HepG2 (cell line): ENCODE measurements at regions of chr15 and their contacts with region 1.

Region 1: DNA sequence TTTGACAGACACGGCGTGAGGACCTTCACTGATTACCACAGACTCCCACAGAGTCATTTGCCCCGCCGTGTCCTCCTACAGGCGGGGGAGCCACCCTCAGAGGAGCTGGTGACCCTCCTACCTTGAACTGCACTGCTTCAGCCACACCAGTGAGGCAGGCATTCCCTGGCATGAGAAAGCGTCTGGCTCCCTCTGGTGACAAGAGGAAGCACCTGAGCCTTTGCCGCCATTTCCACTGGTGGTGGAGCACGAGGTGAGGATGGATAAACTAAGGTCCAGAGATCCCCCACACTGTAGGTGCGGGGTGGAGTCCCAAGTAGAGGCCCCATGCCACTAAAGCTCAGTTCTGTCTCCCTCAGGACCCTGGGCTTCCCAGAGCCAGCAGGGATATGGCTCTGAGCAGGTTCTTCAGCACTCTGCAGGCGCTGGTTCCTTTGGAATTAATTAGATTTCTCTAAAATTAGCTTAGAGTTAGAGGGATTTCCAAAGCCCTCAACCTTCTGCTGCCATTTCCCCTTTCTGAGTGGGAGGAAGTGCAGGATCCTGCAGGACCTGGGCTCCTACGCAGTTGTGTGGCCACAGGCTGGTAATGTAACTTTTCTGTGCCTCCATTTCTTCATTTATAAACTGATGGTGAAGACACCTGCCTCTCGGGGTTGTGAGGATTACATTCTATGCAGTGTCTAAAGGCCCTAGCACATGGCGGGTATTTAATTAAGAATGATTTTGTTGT is 224.0 kb downstream of the SLCO3A1 start:
- DNase-seq: peak; percentile 44
- ATAC-seq: peak; percentile 88
- H3K4me3 ChIP-seq: no peak overlapping the region
- H3K27ac ChIP-seq: no peak overlapping the region
- H3K4me1 ChIP-seq: no peaks in the 10 kb centered on the region
- H3K27me3 ChIP-seq: peaks cover 0 to 12% of the 10 kb centered on the region in 2 experiments; a peak in 3 of 5 replicates
- CTCF ChIP-seq: peak; percentile 90
- EP300 ChIP-seq: no peak
- POLR2A ChIP-seq: no peak
- RAD21 ChIP-seq: peak; percentile 64

Region 2: DNA sequence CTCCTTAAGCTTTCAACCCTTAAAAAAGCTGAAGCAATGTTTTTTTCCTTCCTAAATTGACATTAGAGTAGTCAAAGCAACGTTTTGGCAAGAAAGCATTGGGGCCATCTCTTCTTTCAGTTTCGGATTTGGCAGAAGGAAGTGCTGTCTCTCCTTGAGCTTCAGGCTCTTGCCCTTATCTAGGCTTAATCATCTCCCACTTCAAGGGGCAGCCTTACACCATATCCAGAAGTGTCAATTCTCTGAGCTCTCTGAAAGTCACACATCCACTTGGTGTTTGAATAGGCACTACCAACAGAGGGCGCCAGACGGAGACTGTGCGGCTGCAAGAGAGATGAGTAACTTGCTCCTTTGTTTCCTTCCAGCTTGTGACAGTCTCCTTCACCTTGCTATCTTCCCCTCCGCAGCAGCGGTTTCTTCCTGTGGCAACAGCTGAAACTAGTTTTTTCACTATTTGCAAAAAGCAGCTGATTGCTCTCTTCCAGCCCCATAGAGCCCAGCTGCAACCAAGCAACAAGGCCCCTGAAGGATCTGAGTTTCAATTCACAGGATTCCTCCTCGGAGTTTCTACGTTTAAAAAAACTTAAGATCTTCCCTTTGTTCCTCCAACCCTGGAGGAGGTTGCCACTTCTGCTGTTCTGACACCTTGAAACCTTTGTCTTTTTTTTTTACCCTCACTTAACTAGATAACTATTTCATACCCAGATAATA is 371.0 kb before region 1 on chr15:
- CTCF ChIA-PET with region 1: no interaction called
- POLR2A ChIA-PET with region 1: no interaction called
- in situ Hi-C with region 1: no loop called
- intact Hi-C with region 1: loop called (anchors 2 kb)
- DNase-seq: peak; percentile 38
- ATAC-seq: peak; percentile 80
- H3K4me3 ChIP-seq: no peak overlapping the region
- H3K27ac ChIP-seq: no peak overlapping the region
- H3K4me1 ChIP-seq: no peaks in the 10 kb centered on the region
- H3K27me3 ChIP-seq: no peaks in the 10 kb centered on the region; a peak in 1 of 5 replicates
- CTCF ChIP-seq: peak; percentile 73
- EP300 ChIP-seq: no peak
- POLR2A ChIP-seq: no peak
- RAD21 ChIP-seq: no peak

Region 3: GRCh38 chr15:91852741-91853510 is 224.6 kb before region 1 on chr15:
- CTCF ChIA-PET with region 1: no interaction called
- POLR2A ChIA-PET with region 1: no interaction called
- in situ Hi-C with region 1: no loop called
- intact Hi-C with region 1: loop called (anchors 10 kb)
- DNase-seq: peak; percentile 13
- ATAC-seq: peak; percentile 97
- H3K4me3 ChIP-seq: peak overlapping the region; percentile 40 to 60 (median 46); a peak in 5 of 6 replicates
- H3K27ac ChIP-seq: no peak overlapping the region
- H3K4me1 ChIP-seq: no peaks in the 10 kb centered on the region
- H3K27me3 ChIP-seq: peaks cover 4 to 45% of the 10 kb centered on the region in 2 experiments; a peak in 4 of 5 replicates
- CTCF ChIP-seq: peak; percentile 71
- EP300 ChIP-seq: no peak
- POLR2A ChIP-seq: no peak
- RAD21 ChIP-seq: peak; percentile 42

Region 4: GRCh38 chr15:92693691-92694331 is 616.3 kb after region 1 on chr15:
- CTCF ChIA-PET with region 1: no interaction called
- POLR2A ChIA-PET with region 1: no interaction called
- in situ Hi-C with region 1: loop called (anchors 25 kb)
- intact Hi-C with region 1: no loop called
- DNase-seq: peak; percentile 50
- ATAC-seq: peak; percentile 100
- H3K4me3 ChIP-seq: no peak overlapping the region
- H3K27ac ChIP-seq: no peak overlapping the region
- H3K4me1 ChIP-seq: no peaks in the 10 kb centered on the region
- H3K27me3 ChIP-seq: peaks cover 0 to 12% of the 10 kb centered on the region in 2 experiments; a peak in 2 of 5 replicates
- CTCF ChIP-seq: peak; percentile 72
- EP300 ChIP-seq: no peak
- POLR2A ChIP-seq: no peak
- RAD21 ChIP-seq: no peak